Activated T-helper 2 cell treated with anti-CD3 and anti-CD28 coated beads, Interferon-gamma antibody, Interleukin-2, Interleukin-4, amounts not matched to agents 10 μg/mL and 5 μg/mL and 100 μg/mL, durations not matched to agents 14 hours and 24 hours and 36 hours (primary cell): ENCODE measurements at regions of chr11 and their contacts with region 1.

Region 1: GRCh38 chr11:43643898-43644620 is 36.5 kb upstream of the HSD17B12 start:
- DNase-seq: peak; percentile 84
- H3K4me3 Mint-ChIP-seq: peak overlapping the region; percentile 96
- H3K27ac Mint-ChIP-seq: peak overlapping the region; percentile 87
- H3K4me1 Mint-ChIP-seq: peaks cover 19% of the 10 kb centered on the region
- H3K27me3 Mint-ChIP-seq: peaks cover 15% of the 10 kb centered on the region

Region 2: GRCh38 chr11:43515090-43515489 is 129.0 kb before region 1 on chr11:
- intact Hi-C with region 1: no loop called
- DNase-seq: no peak
- H3K4me3 Mint-ChIP-seq: no peak overlapping the region
- H3K27ac Mint-ChIP-seq: no peak overlapping the region
- H3K4me1 Mint-ChIP-seq: no peaks in the 10 kb centered on the region
- H3K27me3 Mint-ChIP-seq: peaks cover 2% of the 10 kb centered on the region

Region 3: GRCh38 chr11:43680521-43681400 is 36.7 kb after region 1 on chr11 and contains the start of gene HSD17B12:
- intact Hi-C with region 1: loop called (anchors 1 kb)
- DNase-seq: peak; percentile 99
- H3K4me3 Mint-ChIP-seq: peak within 1 kb of the TSS; percentile 96
- H3K27ac Mint-ChIP-seq: peak within 1 kb of the TSS; percentile 96
- H3K4me1 Mint-ChIP-seq: peaks cover 32% of the 10 kb centered on the region
- H3K27me3 Mint-ChIP-seq: peaks cover 2% of the 10 kb centered on the region
- total RNA-seq, gene HSD17B12: 79.8 and 81.3 TPM in 2 replicates

Region 4: DNA sequence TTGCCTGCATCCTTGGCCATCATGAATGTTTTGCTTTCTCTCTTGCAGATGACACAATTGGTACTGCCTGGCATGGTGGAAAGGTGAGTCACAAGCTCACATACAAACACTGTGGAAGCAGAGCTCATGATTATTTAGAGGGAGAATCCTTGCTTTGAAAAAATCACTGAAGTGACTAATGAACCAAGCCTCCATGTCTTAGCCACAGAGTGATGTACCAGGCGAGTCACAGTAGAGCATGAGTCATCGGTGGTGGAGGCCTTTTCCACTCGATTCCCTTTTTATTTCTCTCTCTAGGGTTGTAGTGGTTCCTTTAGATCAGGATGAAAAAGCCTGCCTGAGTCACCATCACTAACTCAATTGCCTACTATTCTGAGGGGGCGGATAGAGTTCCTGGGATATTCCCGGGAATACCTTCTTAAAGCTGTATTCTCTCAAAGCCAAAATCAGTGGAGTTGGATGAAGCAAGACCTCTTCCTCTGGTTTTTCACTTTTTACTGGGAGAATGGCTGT is 186.9 kb after region 1 on chr11:
- intact Hi-C with region 1: loop called (anchors 2 kb)
- DNase-seq: no peak
- H3K4me3 Mint-ChIP-seq: no peak overlapping the region
- H3K27ac Mint-ChIP-seq: peak overlapping the region; percentile 91
- H3K4me1 Mint-ChIP-seq: peaks cover 16% of the 10 kb centered on the region
- H3K27me3 Mint-ChIP-seq: no peaks in the 10 kb centered on the region

Region 5: GRCh38 chr11:43880640-43881159 is 236.6 kb after region 1 on chr11 and contains the start of gene ALKBH3:
- intact Hi-C with region 1: loop called (anchors 5 kb)
- DNase-seq: peak; percentile 85
- H3K4me3 Mint-ChIP-seq: peak within 1 kb of the TSS; percentile 90
- H3K27ac Mint-ChIP-seq: peak within 1 kb of the TSS; percentile 77
- H3K4me1 Mint-ChIP-seq: peaks cover 16% of the 10 kb centered on the region
- H3K27me3 Mint-ChIP-seq: peaks cover 8% of the 10 kb centered on the region
- total RNA-seq, gene ALKBH3: 32.2 and 32.7 TPM in 2 replicates